Vagina (tissue), 2 donors: ENCODE measurements at regions of chr6 and their contacts with region 1.

Region 1: GRCh38 chr6:42043787-42044475 is 6.4 kb upstream of the TAF8 start:
- DNase-seq: no peak
- H3K4me3 ChIP-seq: peak overlapping the region in 1 of 2 donors; percentile 3
- H3K27ac ChIP-seq: peak overlapping the region; percentile 95
- H3K4me1 ChIP-seq: peaks cover 81% of the 10 kb centered on the region
- H3K27me3 ChIP-seq: no peaks in the 10 kb centered on the region
- CTCF ChIP-seq: peak; percentile 80 to 94 (median 89)
- POLR2A ChIP-seq: no peak

Region 2: GRCh38 chr6:41779793-41780545 is 264.0 kb before region 1 on chr6 and contains the start of gene FRS3:
- intact Hi-C with region 1: loop called (anchors 2 kb)
- DNase-seq: peak in 1 of 2 donors; percentile 96
- H3K4me3 ChIP-seq: peak within 1 kb of the TSS; percentile 83 to 89
- H3K27ac ChIP-seq: peak within 1 kb of the TSS; percentile 94
- H3K4me1 ChIP-seq: peaks cover 36% of the 10 kb centered on the region
- H3K27me3 ChIP-seq: no peaks in the 10 kb centered on the region
- CTCF ChIP-seq: peak; percentile 77 to 92 (median 77)
- POLR2A ChIP-seq: no peak
- total RNA-seq, gene FRS3: 4.4 TPM

Region 3: DNA sequence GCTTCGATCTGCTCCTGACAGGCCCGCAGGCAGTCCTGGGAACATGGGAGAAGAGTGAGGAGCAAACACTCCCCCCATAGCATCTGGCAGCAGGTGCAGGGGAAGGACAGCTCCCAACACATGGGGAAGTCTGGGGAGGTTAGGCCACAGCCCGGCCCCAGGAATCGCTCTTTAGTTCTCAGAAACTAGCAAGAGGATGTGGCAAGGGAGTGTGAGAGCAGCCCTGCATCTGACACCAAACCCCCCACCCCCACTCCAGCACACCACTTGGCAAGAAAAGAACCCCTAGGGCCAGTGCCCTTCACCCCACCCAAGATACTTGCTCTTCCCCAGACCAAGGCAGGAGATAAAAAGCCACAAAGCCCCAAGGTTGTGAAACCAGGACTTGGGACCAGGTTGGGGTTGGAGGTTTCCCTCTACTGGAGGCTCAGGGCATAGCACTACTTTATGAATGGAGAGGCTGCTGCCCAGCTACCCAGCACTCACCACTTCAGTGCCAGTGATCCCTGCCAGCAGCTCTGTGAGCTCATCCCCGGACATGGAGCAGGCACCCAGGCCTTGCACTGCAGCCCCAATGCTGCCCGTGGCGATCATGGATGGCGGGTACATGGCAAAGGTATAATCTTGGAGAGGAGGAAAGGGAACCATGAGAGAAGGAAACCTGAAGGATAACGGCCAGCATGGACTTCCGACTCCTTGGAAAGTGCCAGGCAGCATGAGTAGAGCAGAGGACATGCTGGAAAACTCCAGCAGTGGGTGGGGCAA is 107.7 kb before region 1 on chr6:
- intact Hi-C with region 1: loop called (anchors 5 kb)
- DNase-seq: no peak
- H3K4me3 ChIP-seq: no peak overlapping the region
- H3K27ac ChIP-seq: no peak overlapping the region
- H3K4me1 ChIP-seq: peaks cover 55% of the 10 kb centered on the region
- H3K27me3 ChIP-seq: no peaks in the 10 kb centered on the region
- CTCF ChIP-seq: peak; percentile 36 to 53 (median 48)
- POLR2A ChIP-seq: no peak

Region 4: GRCh38 chr6:42547407-42548329 is 503.7 kb after region 1 on chr6:
- intact Hi-C with region 1: no loop called
- DNase-seq: no peak
- H3K4me3 ChIP-seq: peak overlapping the region; percentile 39 to 41
- H3K27ac ChIP-seq: peak overlapping the region; percentile 54
- H3K4me1 ChIP-seq: peaks cover 11% of the 10 kb centered on the region
- H3K27me3 ChIP-seq: no peaks in the 10 kb centered on the region
- CTCF ChIP-seq: peak; percentile 87 to 93 (median 92)
- POLR2A ChIP-seq: no peak